ENCODE measurements at regions of chr6 and their contacts with region 1.

Region 1: DNA sequence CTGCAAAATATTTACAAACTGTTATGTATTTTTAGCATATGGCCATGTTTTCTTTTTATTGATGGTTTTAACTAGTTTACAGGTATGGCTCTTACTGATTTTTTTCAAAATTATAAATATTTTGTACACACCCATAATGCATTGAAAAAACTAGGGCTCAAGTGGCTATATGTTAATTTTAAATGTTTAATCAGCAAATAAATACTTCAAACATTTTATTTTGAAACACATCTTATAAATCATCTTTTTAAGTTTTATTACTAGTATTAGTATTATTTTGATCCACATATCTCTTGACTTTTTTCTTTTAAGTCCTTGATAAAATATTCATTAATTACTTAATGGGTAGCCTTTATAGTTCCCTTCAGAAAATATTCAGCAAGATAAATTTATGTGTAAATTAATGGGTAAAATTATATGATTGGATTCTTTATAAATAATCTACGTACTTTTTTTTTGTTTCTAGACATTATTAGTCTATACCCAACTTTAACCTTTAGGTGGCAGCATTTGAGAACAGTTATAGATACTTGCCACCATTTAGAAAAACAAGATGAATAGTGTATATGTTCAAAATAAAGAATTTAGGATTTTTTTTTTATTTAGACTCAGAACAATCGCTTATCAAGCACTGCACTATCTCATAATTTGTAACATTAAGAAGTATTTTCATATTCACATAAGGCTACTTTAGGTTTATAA is 241.9 kb downstream of the ADGRB3 start:
- DNase-seq: no peak
- H3K4me3 ChIP-seq: no peak overlapping the region
- H3K27ac ChIP-seq: no peak overlapping the region
- H3K4me1 ChIP-seq: no peaks in the 10 kb centered on the region
- H3K27me3 ChIP-seq: no peaks in the 10 kb centered on the region
- CTCF ChIP-seq: peak in 1 of 4 experiments; percentile 12
- EP300 ChIP-seq: no peak
- POLR2A ChIP-seq: no peak

Region 2: GRCh38 chr6:68958327-68958726 is 81.4 kb after region 1 on chr6:
- intact Hi-C with region 1: loop called (anchors 10 kb)
- DNase-seq: no peak
- H3K4me3 ChIP-seq: no peak overlapping the region
- H3K27ac ChIP-seq: no peak overlapping the region
- H3K4me1 ChIP-seq: no peaks in the 10 kb centered on the region
- H3K27me3 ChIP-seq: no peaks in the 10 kb centered on the region
- CTCF ChIP-seq: no peak
- EP300 ChIP-seq: no peak
- POLR2A ChIP-seq: no peak